Heart right ventricle (tissue), 16 donors: ENCODE measurements at regions of chr10 and their contacts with region 1.

Region 1: GRCh38 chr10:70558871-70559810 is 43.4 kb downstream of the PRF1 start:
- DNase-seq: peak; percentile 75
- ATAC-seq: peak; percentile 49 to 82 (median 76)
- H3K4me3 ChIP-seq: peak overlapping the region in 5 of 10 donors; percentile 2 to 32 (median 18)
- H3K27ac ChIP-seq: peak overlapping the region in 8 of 10 donors; percentile 39 to 75 (median 54)
- H3K4me1 ChIP-seq: peaks cover 7 to 51% (median 43%) of the 10 kb centered on the region in 9 donors
- H3K27me3 ChIP-seq: no peaks in the 10 kb centered on the region
- CTCF ChIP-seq: peak; percentile 33 to 71 (median 59)

Region 2: DNA sequence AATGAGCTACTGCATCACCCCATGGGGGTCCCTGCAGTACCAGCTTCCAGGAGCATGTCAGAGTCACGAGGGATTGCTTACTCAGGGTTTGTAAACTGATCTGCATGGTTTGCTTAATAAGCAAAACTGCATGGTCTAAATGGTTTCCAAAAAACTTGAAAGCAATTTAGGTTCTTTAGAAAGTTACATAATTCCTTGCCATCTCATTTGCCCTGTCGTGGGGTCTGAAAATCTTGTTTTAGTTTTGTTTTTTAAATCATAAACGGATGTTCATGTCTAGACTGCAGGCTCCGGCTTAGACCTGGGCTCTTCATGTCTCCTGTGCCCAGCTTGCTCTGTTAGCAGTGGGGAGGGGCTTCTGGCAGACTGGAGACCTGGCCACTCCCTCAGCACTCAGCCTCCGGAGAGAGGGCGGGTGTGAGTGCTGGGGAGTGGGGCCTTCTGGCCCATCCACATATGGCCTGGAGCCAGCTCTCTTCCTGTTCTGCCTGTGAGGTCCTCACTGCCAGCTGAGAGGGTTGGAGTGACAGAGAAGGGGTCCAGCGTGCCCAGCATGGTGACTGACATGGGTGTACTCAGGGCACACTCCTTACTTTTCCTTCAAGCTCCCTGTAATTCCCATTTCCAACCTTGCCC is 25.9 kb after region 1 on chr10:
- intact Hi-C with region 1: no loop called
- DNase-seq: no peak
- ATAC-seq: peak in 5 of 8 donors; percentile 20 to 63 (median 24)
- H3K4me3 ChIP-seq: no peak overlapping the region
- H3K27ac ChIP-seq: peak overlapping the region in 5 of 10 donors; percentile 25 to 49 (median 29)
- H3K4me1 ChIP-seq: peaks cover 2 to 56% (median 45%) of the 10 kb centered on the region in 9 donors
- H3K27me3 ChIP-seq: no peaks in the 10 kb centered on the region
- CTCF ChIP-seq: no peak

Region 3: DNA sequence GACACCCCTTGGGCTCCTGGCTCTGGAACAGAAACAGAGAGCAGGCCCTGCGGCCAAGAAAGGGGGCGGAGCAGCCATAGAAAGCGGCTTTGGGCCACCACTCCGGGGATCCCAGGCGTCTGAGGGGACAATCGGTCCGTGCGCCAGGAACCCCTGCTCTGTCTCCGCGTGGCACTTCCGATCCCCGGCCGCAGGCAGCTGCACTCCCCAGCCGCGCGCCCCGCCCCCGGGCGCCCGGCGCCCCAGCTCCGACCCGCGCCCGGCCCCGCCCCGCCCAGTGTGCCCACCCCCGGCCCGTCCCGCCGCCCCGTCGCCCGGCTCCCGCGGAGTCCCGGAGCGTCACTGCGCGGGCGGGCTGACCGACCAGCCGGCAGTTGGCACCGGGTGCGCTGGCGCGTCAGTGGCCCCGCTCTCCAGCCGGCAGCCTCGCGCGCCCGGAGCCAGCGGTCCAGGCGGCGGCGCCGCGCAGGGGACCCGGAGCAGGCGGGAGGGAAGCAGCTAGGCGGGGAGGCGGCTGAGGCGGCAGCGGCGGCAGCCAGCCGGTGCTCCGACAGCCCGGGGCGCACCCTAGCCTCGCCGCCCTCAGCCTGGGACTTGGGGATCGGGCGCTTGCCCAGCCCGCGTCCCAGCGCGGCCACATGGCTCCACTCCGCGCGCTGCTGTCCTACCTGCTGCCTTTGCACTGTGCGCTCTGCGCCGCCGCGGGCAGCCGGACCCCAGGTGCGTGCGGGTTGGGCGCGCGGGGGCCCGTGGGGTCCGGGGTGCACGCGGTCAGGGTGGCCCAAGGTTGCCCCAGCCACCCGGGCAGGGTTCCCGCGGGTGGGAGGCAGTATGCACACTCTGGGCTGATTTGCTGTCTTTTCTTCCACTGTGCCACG is 113.3 kb after region 1 on chr10 and contains the start of gene ADAMTS14:
- intact Hi-C with region 1: loop called in 6 of 10 experiments (anchors 5 to 10 kb)
- DNase-seq: peak in 1 of 2 donors; percentile 50
- ATAC-seq: peak in 7 of 8 donors; percentile 17 to 60 (median 53)
- H3K4me3 ChIP-seq: peak within 1 kb of the TSS; percentile 6 to 56 (median 50)
- H3K27ac ChIP-seq: peak within 1 kb of the TSS in 4 of 10 donors; percentile 62 to 79 (median 70)
- H3K4me1 ChIP-seq: peaks cover 0 to 40% (median 26%) of the 10 kb centered on the region in 9 donors
- H3K27me3 ChIP-seq: peaks cover 0 to 31% (median 3%) of the 10 kb centered on the region in 7 donors
- CTCF ChIP-seq: no peak
- total RNA-seq, gene ADAMTS14: 0.08 to 1.4 (median 0.59) TPM

Region 4: DNA sequence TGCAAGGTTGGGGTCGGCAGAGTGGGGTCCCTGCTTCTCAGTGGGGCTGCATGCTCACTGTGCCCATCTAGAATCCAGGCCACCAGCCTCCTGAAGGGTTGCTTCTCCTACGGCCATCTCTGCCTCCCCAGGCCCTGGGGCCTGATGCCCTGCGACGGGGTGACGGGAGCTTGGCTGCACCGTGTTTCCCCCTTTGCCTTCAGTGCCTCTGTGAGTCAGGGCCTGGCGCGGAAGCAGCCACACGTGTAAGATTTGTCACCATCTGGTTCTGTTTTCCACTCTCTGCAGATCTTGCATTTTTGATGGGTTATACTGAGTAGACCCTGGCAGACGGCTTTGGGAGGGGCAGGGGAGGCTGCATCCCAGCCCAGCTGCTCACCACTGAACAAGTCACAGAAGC is 120.4 kb after region 1 on chr10:
- intact Hi-C with region 1: loop called in 6 of 10 experiments (anchors 5 to 10 kb)
- DNase-seq: peak in 1 of 2 donors; percentile 48
- ATAC-seq: peak in 7 of 8 donors; percentile 21 to 62 (median 37)
- H3K4me3 ChIP-seq: no peak overlapping the region
- H3K27ac ChIP-seq: no peak overlapping the region
- H3K4me1 ChIP-seq: peaks cover 0 to 25% (median 12%) of the 10 kb centered on the region in 9 donors
- H3K27me3 ChIP-seq: no peaks in the 10 kb centered on the region
- CTCF ChIP-seq: no peak